MCF 10A (cell line): ENCODE measurements at regions of chr1 and their contacts with region 1.

Region 1: GRCh38 chr1:25810341-25811299 is 9.1 kb upstream of the MTFR1L start:
- DNase-seq: peak; percentile 50
- H3K4me3 Mint-ChIP-seq: no peak overlapping the region
- H3K27ac Mint-ChIP-seq: peak overlapping the region; percentile 70
- H3K4me1 Mint-ChIP-seq: peaks cover 8% of the 10 kb centered on the region
- H3K27me3 Mint-ChIP-seq: no peaks in the 10 kb centered on the region
- CTCF ChIP-seq: peak; percentile 92

Region 2: DNA sequence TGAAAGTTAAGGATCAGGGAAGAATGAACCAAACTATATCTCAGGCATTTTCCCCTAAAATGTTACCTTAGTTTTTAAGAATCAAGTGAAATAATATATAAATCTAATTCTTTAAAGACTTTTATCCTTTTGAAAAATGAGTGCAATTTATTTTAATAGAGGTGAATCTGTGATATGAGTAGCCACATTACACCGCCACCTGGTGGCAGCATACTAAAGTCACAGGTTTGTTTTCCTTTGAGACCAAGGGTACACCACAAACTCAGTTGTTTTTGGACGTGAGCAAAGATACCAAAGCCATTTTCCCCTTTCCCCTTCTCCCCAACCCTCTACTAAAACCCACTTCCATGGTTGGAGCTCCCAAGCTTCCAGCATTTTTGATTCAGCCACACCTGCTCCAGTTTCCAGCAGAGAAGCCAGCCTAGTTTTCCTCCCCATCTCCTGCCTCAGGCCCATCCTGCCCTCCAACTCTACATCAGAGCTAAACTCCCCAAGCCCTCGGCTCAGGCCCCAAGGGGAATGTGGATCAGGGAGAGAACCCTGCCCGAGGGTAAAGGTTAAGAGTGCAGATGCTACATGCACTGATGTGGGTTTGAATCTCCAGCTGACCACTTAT is 290.1 kb before region 1 on chr1:
- CTCF ChIA-PET with region 1: interaction called, 9 read pairs
- POLR2A ChIA-PET with region 1: no interaction called
- intact Hi-C with region 1: loop called (anchors 5 kb)
- DNase-seq: peak; percentile 69
- H3K4me3 Mint-ChIP-seq: no peak overlapping the region
- H3K27ac Mint-ChIP-seq: no peak overlapping the region
- H3K4me1 Mint-ChIP-seq: no peaks in the 10 kb centered on the region
- H3K27me3 Mint-ChIP-seq: peaks cover 9% of the 10 kb centered on the region
- CTCF ChIP-seq: peak; percentile 62